ENCODE measurements at regions of chr1 and their contacts with region 1.

Region 1: DNA sequence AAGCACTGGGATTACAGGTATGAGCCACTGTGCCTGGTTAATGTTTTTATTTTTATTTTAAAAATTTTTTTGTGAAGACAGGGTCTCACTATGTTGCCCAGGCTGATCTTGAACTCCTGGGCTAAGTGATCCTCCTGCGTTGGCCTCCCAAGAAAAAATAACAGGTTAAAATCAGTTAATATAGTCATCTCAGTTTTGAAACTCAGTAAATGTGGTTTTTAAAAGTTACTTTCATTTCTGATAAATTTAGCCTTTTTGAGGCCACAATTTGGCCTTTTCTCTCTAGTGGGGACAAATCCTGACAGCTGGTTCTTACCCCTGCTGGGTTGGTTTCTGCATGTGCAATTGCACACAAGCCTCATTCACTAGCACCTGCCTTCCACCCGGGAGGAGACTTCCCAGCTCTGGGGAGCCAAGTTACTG is 13.3 kb downstream of the PMF1 start:
- DNase-seq: no peak
- ATAC-seq: no peak
- H3K4me3 ChIP-seq: no peak overlapping the region
- H3K4me3 Mint-ChIP-seq: no peak overlapping the region
- H3K27ac ChIP-seq: no peak overlapping the region
- H3K27ac Mint-ChIP-seq: peak overlapping the region; percentile 11 to 68
- H3K4me1 ChIP-seq: peaks cover 0 to 16% of the 10 kb centered on the region in 2 experiments
- H3K4me1 Mint-ChIP-seq: peaks cover 10 to 39% (median 32%) of the 10 kb centered on the region in 3 donors
- H3K27me3 ChIP-seq: no peaks in the 10 kb centered on the region
- H3K27me3 Mint-ChIP-seq: no peaks in the 10 kb centered on the region

Region 2: GRCh38 chr1:156090822-156091188 is 135.3 kb before region 1 on chr1:
- CTCF ChIA-PET with region 1: interaction called in 1 of 2 experiments, 15 read pairs
- POLR2A ChIA-PET with region 1: interaction called in 1 of 2 experiments, 5 read pairs
- DNase-seq: peak; percentile 71 to 94 (median 86)
- ATAC-seq: peak; percentile 92 to 97 (median 96)
- H3K4me3 ChIP-seq: no peak overlapping the region
- H3K4me3 Mint-ChIP-seq: no peak overlapping the region
- H3K27ac ChIP-seq: no peak overlapping the region
- H3K27ac Mint-ChIP-seq: peak overlapping the region in 1 of 2 donors; percentile 41
- H3K4me1 ChIP-seq: peaks cover 2 to 13% of the 10 kb centered on the region in 2 experiments
- H3K4me1 Mint-ChIP-seq: peaks cover 9 to 18% (median 14%) of the 10 kb centered on the region in 3 donors
- H3K27me3 ChIP-seq: peaks cover 0 to 38% of the 10 kb centered on the region in 2 experiments
- H3K27me3 Mint-ChIP-seq: peaks cover 20 to 21% of the 10 kb centered on the region in 2 donors

Region 3: GRCh38 chr1:156129706-156130581 is 96.2 kb before region 1 on chr1:
- CTCF ChIA-PET with region 1: interaction called in 1 of 2 experiments, 8 read pairs
- POLR2A ChIA-PET with region 1: interaction called in 1 of 2 experiments, 11 read pairs
- DNase-seq: peak in 33 of 35 experiments; percentile 25 to 86 (median 69)
- ATAC-seq: peak in 3 of 4 experiments; percentile 10 to 41 (median 18)
- H3K4me3 ChIP-seq: no peak overlapping the region
- H3K4me3 Mint-ChIP-seq: peak overlapping the region in 1 of 3 donors; percentile 73
- H3K27ac ChIP-seq: no peak overlapping the region
- H3K27ac Mint-ChIP-seq: peak overlapping the region in 1 of 2 donors; percentile 55
- H3K4me1 ChIP-seq: peaks cover 23 to 57% of the 10 kb centered on the region in 2 experiments
- H3K4me1 Mint-ChIP-seq: peaks cover 49 to 53% (median 52%) of the 10 kb centered on the region in 3 donors
- H3K27me3 ChIP-seq: peaks cover 0 to 17% of the 10 kb centered on the region in 2 experiments
- H3K27me3 Mint-ChIP-seq: no peaks in the 10 kb centered on the region

Region 4: GRCh38 chr1:156146020-156146768 is 79.9 kb before region 1 on chr1:
- CTCF ChIA-PET with region 1: interaction called, 11 to 31 read pairs
- POLR2A ChIA-PET with region 1: interaction called, 3 to 4 read pairs
- DNase-seq: peak in 16 of 35 experiments; percentile 25 to 79 (median 37)
- ATAC-seq: peak; percentile 60 to 89 (median 88)
- H3K4me3 ChIP-seq: no peak overlapping the region
- H3K4me3 Mint-ChIP-seq: peak overlapping the region; percentile 46 to 58 (median 48)
- H3K27ac ChIP-seq: no peak overlapping the region
- H3K27ac Mint-ChIP-seq: peak overlapping the region; percentile 16 to 43
- H3K4me1 ChIP-seq: peaks cover 2 to 26% of the 10 kb centered on the region in 2 experiments
- H3K4me1 Mint-ChIP-seq: peaks cover 17 to 23% (median 23%) of the 10 kb centered on the region in 3 donors
- H3K27me3 ChIP-seq: peaks cover 0 to 19% of the 10 kb centered on the region in 2 experiments
- H3K27me3 Mint-ChIP-seq: no peaks in the 10 kb centered on the region

Region 5: DNA sequence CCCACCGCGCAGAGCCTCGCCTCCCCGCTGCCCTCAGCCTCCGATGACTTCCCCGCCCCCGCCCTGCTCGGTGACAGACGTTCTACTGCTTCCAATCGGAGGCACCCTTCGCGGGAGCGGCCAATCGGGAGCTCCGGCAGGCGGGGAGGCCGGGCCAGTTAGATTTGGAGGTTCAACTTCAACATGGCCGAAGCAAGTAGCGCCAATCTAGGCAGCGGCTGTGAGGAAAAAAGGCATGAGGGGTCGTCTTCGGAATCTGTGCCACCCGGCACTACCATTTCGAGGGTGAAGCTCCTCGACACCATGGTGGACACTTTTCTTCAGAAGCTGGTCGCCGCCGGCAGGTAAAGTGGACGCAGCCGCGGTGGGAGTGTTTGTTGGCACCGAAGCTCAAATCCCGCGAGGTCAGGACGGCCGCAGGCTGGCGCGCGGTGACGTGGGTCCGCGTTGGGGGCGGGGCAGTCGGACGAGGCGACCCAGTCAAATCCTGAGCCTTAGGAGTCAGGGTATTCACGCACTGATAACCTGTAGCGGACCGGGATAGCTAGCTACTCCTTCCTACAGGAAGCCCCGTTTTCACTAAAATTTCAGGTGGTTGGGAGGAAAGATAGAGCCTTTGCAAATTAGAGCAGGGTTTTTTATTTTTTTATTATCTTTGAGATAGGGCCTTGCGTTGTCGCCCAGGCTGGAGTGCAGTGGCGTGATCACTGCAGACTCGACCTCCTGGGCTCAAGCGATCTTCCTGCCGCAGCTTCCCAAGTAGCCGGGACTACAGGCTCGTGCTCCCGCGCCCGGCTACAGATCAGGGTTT is 13.1 kb before region 1 on chr1 and contains the start of gene PMF1:
- CTCF ChIA-PET with region 1: interaction called in 1 of 2 experiments, 40 read pairs
- POLR2A ChIA-PET with region 1: interaction called, 3 to 7 read pairs
- DNase-seq: peak; percentile 90 to 96 (median 94)
- ATAC-seq: peak; percentile 95 to 97 (median 96)
- H3K4me3 ChIP-seq: peak within 1 kb of the TSS; percentile 91 to 93
- H3K4me3 Mint-ChIP-seq: peak within 1 kb of the TSS; percentile 95 to 96 (median 95)
- H3K27ac ChIP-seq: peak within 1 kb of the TSS; percentile 97
- H3K27ac Mint-ChIP-seq: peak within 1 kb of the TSS; percentile 98
- H3K4me1 ChIP-seq: peaks cover 7 to 37% of the 10 kb centered on the region in 2 experiments
- H3K4me1 Mint-ChIP-seq: peaks cover 31 to 48% (median 42%) of the 10 kb centered on the region in 3 donors
- H3K27me3 ChIP-seq: no peaks in the 10 kb centered on the region
- H3K27me3 Mint-ChIP-seq: no peaks in the 10 kb centered on the region
- total RNA-seq, gene PMF1: 54.7 to 58.7 (median 57.6) TPM

Measured in T-cell (primary cell).